ENCODE measurements at regions of chrX and their contacts with region 1.

Region 1: GRCh38 chrX:106959901-106960300 is 39.7 kb downstream of the CLDN2 start:
- DNase-seq: no peak
- H3K4me3 ChIP-seq: no peak overlapping the region
- H3K27ac ChIP-seq: no peak overlapping the region
- H3K4me1 ChIP-seq: no peaks in the 10 kb centered on the region
- H3K27me3 ChIP-seq: no peaks in the 10 kb centered on the region
- CTCF ChIP-seq: no peak
- EP300 ChIP-seq: no peak
- POLR2A ChIP-seq: no peak

Region 2: DNA sequence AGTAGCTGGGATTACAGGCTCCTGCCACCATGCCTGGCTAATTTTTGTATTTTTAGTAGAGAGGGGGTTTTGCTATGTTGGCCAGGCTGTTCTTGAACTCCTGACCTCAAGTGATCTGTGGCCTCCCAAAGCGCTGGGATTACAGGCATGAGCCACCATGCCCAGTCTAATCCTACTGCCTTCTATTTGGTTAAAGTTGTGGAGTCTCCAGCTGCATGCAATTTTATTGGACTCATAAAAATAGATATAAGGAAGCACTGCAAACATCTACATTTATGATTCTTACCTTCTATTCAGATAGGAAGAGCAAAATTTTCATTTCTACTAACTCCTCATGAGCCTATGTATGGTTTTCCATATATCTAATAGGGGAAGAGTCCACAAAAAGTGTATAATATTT is 70.4 kb before region 1 on chrX:
- intact Hi-C with region 1: no loop called
- DNase-seq: no peak
- H3K4me3 ChIP-seq: no peak overlapping the region
- H3K27ac ChIP-seq: no peak overlapping the region
- H3K4me1 ChIP-seq: no peaks in the 10 kb centered on the region
- H3K27me3 ChIP-seq: no peaks in the 10 kb centered on the region
- CTCF ChIP-seq: no peak
- EP300 ChIP-seq: no peak
- POLR2A ChIP-seq: no peak

Region 3: DNA sequence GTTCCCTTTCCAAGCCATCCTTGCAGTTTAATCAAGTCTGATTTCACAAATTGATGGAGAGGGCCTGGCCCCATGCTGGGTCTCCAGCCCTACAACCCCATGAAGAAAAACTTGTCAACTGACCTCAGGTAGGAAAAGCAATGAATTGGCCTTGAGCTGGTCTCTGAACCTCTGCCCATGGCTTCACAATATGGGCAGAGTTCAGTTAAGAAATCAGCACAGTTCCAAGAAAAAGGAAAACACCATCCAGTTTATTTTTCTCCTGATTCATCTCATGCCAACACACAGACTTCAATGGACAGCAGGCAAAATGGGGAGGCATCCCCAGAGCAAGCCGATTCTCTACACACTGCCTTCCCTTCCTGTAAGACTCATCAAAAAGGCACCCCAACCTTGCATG is 60.1 kb before region 1 on chrX:
- intact Hi-C with region 1: loop called in 1 of 4 experiments (anchors 2 kb)
- DNase-seq: no peak
- H3K4me3 ChIP-seq: no peak overlapping the region
- H3K27ac ChIP-seq: no peak overlapping the region
- H3K4me1 ChIP-seq: no peaks in the 10 kb centered on the region
- H3K27me3 ChIP-seq: no peaks in the 10 kb centered on the region
- CTCF ChIP-seq: no peak
- EP300 ChIP-seq: no peak
- POLR2A ChIP-seq: no peak

Measured in ovary (tissue), 10 donors.